Caco-2 (cell line): ENCODE measurements at regions of chr1 and their contacts with region 1.

Region 1: GRCh38 chr1:153510984-153511410 is 24.8 kb downstream of the S100A6 start:
- DNase-seq: peak; percentile 90 to 93
- H3K4me3 ChIP-seq: no peak overlapping the region
- H3K4me3 Mint-ChIP-seq: no peak overlapping the region
- H3K27ac Mint-ChIP-seq: peak overlapping the region; percentile 74
- H3K4me1 ChIP-seq: peaks cover 48% of the 10 kb centered on the region
- H3K4me1 Mint-ChIP-seq: peaks cover 50% of the 10 kb centered on the region
- H3K27me3 ChIP-seq: no peaks in the 10 kb centered on the region
- H3K27me3 Mint-ChIP-seq: no peaks in the 10 kb centered on the region
- CTCF ChIP-seq: peak; percentile 93 to 94

Region 2: GRCh38 chr1:152878042-152878441 is 633.0 kb before region 1 on chr1 and contains the start of gene SMCP:
- CTCF ChIA-PET with region 1: no interaction called
- POLR2A ChIA-PET with region 1: no interaction called
- intact Hi-C with region 1: no loop called
- DNase-seq: peak in 1 of 2 experiments; percentile 18
- H3K4me3 ChIP-seq: no peak within 1 kb of the TSS
- H3K4me3 Mint-ChIP-seq: no peak within 1 kb of the TSS
- H3K27ac Mint-ChIP-seq: no peak within 1 kb of the TSS
- H3K4me1 ChIP-seq: no peaks in the 10 kb centered on the region
- H3K4me1 Mint-ChIP-seq: no peaks in the 10 kb centered on the region
- H3K27me3 ChIP-seq: no peaks in the 10 kb centered on the region
- H3K27me3 Mint-ChIP-seq: peaks cover 10% of the 10 kb centered on the region
- CTCF ChIP-seq: no peak
- total RNA-seq, gene SMCP: not detected in 2 replicates

Region 3: GRCh38 chr1:153572569-153573015 is 61.6 kb after region 1 on chr1:
- CTCF ChIA-PET with region 1: interaction called, 22 read pairs
- POLR2A ChIA-PET with region 1: no interaction called
- intact Hi-C with region 1: loop called (anchors 1 kb)
- DNase-seq: peak; percentile 63 to 69
- H3K4me3 ChIP-seq: no peak overlapping the region
- H3K4me3 Mint-ChIP-seq: no peak overlapping the region
- H3K27ac Mint-ChIP-seq: peak overlapping the region; percentile 29
- H3K4me1 ChIP-seq: peaks cover 58% of the 10 kb centered on the region
- H3K4me1 Mint-ChIP-seq: peaks cover 65% of the 10 kb centered on the region
- H3K27me3 ChIP-seq: no peaks in the 10 kb centered on the region
- H3K27me3 Mint-ChIP-seq: no peaks in the 10 kb centered on the region
- CTCF ChIP-seq: peak in 1 of 2 experiments; percentile 70

Region 4: GRCh38 chr1:153626922-153627796 is 116.2 kb after region 1 on chr1 and contains the start of gene S100A13:
- CTCF ChIA-PET with region 1: interaction called, 13 read pairs
- POLR2A ChIA-PET with region 1: interaction called, 12 read pairs
- intact Hi-C with region 1: loop called (anchors 1 kb)
- DNase-seq: peak; percentile 92 to 94
- H3K4me3 ChIP-seq: peak within 1 kb of the TSS; percentile 62
- H3K4me3 Mint-ChIP-seq: peak within 1 kb of the TSS; percentile 93
- H3K27ac Mint-ChIP-seq: peak within 1 kb of the TSS; percentile 89
- H3K4me1 ChIP-seq: peaks cover 42% of the 10 kb centered on the region
- H3K4me1 Mint-ChIP-seq: peaks cover 35% of the 10 kb centered on the region
- H3K27me3 ChIP-seq: no peaks in the 10 kb centered on the region
- H3K27me3 Mint-ChIP-seq: no peaks in the 10 kb centered on the region
- CTCF ChIP-seq: peak; percentile 78 to 87
- total RNA-seq, gene S100A13: 198 and 238 TPM in 2 replicates

Region 5: DNA sequence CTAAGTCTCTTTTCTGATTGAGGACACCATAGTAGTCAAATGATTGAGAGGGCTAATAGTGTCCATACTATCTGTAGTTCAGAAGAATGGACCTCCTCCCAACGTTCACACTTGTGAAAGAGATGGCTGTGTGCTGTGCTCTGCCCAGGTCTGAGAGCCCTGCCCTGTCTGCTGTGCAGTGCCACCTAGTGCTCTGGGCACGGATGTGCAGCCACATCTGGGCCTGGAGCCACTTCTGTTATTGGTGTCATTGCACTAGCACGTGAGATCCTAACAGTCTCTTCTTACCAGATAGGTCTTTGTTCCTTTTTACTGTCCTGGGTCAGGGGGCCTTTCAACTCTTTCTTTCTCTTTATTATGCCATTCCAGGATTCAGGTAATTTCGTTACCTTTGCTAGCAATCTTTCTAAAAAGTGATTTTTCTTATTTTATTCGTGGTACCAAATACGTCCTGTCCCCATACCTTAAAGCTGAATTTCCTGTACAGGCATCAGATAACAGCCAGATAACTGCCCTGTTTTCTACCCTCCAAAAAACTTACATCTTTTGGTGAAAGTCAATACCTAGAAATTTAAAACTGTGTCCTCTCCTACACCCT is 238.5 kb after region 1 on chr1:
- CTCF ChIA-PET with region 1: no interaction called
- POLR2A ChIA-PET with region 1: no interaction called
- intact Hi-C with region 1: loop called (anchors 1 kb)
- DNase-seq: peak; percentile 79 to 85
- H3K4me3 ChIP-seq: no peak overlapping the region
- H3K4me3 Mint-ChIP-seq: no peak overlapping the region
- H3K27ac Mint-ChIP-seq: no peak overlapping the region
- H3K4me1 ChIP-seq: no peaks in the 10 kb centered on the region
- H3K4me1 Mint-ChIP-seq: peaks cover under 1% of the 10 kb centered on the region
- H3K27me3 ChIP-seq: no peaks in the 10 kb centered on the region
- H3K27me3 Mint-ChIP-seq: no peaks in the 10 kb centered on the region
- CTCF ChIP-seq: peak; percentile 88 to 97